A673 (cell line): ENCODE measurements at regions of chr7 and their contacts with region 1.

Region 1: DNA sequence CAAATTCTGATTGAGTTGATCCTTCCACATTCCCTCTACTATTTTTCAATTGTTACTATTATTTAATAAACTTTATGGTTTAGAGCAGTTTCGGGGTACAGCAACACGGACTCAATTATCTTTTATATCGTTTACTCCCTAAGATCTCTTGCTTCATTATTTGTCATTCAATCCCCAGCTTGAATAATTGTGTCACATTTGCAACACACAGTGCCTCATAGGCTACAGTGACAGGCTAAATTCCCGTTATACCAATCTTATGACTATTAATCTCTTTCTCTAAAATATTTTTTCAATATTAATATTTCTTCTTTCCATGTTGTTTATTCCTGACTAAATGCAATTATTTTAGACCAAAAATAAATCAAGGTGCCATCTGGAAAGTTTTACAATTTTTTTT is 4.0 kb upstream of the COL28A1 start:
- DNase-seq: no peak
- H3K4me3 ChIP-seq: no peak overlapping the region
- H3K27ac ChIP-seq: no peak overlapping the region
- H3K4me1 ChIP-seq: no peaks in the 10 kb centered on the region
- H3K27me3 ChIP-seq: no peaks in the 10 kb centered on the region
- CTCF ChIP-seq: no peak

Region 2: DNA sequence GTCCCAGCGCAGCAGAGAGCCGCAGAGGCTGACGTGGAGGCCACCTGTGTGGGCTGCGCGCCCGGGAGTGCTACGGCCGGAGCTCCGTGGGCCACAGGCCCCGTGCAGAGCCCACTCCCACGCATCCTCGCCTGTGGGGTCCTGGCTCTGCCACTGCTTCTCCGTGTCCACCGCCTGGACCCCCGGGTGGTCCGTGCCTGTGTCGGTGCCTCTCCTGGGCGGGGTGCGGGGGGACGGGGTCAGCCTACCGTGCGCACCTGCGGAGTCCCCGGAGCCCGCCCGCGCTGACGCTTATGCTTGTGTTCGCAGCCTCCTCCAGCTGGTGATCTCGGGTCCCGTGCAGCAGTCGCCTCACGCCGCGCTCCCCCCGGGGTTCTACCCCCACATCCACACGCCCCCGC is 932.1 kb before region 1 on chr7:
- CTCF ChIA-PET with region 1: no interaction called
- POLR2A ChIA-PET with region 1: no interaction called
- intact Hi-C with region 1: no loop called
- DNase-seq: no peak
- H3K4me3 ChIP-seq: no peak overlapping the region
- H3K27ac ChIP-seq: no peak overlapping the region
- H3K4me1 ChIP-seq: no peaks in the 10 kb centered on the region
- H3K27me3 ChIP-seq: no peaks in the 10 kb centered on the region
- CTCF ChIP-seq: no peak

Region 3: GRCh38 chr7:7424151-7424873 is 115.4 kb before region 1 on chr7:
- CTCF ChIA-PET with region 1: no interaction called
- POLR2A ChIA-PET with region 1: no interaction called
- intact Hi-C with region 1: loop called (anchors 2 kb)
- DNase-seq: peak; percentile 76
- H3K4me3 ChIP-seq: peak overlapping the region; percentile 33
- H3K27ac ChIP-seq: no peak overlapping the region
- H3K4me1 ChIP-seq: no peaks in the 10 kb centered on the region
- H3K27me3 ChIP-seq: peaks cover 3% of the 10 kb centered on the region
- CTCF ChIP-seq: peak; percentile 86